Lower leg skin (tissue), 4 donors: ENCODE measurements at regions of chr11 and their contacts with region 1.

Region 1: GRCh38 chr11:124070915-124071635 is 29.9 kb upstream of the OR10G7 start:
- DNase-seq: peak; percentile 31 to 92
- H3K4me3 ChIP-seq: no peak overlapping the region
- CTCF ChIP-seq: no peak
- POLR2A ChIP-seq: no peak

Region 2: GRCh38 chr11:124194698-124195410 is 123.8 kb after region 1 on chr11:
- intact Hi-C with region 1: loop called (anchors 10 kb)
- DNase-seq: peak in 1 of 2 donors; percentile 56
- H3K4me3 ChIP-seq: no peak overlapping the region
- CTCF ChIP-seq: peak in 1 of 3 donors; percentile 13
- POLR2A ChIP-seq: no peak

Region 3: DNA sequence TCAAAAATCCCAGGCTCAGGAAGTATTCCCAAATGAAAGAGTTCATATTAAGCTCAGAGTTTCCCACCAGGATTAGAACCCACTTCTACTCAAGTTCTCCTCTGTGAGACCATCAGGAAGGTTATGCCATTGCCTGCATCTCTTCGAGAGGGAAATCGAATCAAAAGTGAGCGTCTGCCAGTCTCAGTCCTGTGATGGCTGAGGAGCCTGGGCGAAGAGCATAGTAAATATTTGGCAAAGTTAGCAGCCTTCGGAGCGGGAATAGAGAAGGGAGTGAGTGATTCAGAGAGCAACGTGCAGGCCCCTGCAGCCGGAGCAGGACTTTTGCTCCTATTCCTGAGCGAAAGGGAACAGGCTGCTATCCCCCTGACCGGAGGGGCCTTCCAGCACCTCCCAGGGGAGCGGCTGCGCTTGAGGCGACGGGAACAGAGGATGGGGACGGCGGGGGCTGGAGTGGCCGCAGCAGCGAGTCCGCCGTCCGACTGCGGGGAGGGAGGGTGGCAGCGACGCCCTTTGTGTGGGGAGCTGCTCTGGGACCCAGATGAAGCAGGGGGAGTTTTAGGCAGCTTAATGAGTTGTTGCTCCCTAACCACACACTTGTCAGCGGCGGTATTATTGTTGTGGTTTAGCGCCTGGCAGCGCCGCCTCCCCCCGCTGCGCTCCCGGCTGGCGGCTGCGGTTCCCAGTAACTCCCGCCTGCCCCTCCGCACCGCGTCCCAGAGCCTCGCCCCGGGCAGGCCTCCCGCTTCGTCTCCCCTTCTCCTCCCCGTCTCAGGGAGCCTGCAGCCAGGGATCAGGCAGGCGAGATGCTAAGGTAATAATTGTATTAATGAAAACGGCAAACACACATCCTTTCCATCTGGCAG is 646.9 kb after region 1 on chr11:
- intact Hi-C with region 1: no loop called
- DNase-seq: no peak
- H3K4me3 ChIP-seq: no peak overlapping the region
- CTCF ChIP-seq: no peak
- POLR2A ChIP-seq: no peak